MCF 10A (cell line): ENCODE measurements at regions of chr1 and their contacts with region 1.

Region 1: DNA sequence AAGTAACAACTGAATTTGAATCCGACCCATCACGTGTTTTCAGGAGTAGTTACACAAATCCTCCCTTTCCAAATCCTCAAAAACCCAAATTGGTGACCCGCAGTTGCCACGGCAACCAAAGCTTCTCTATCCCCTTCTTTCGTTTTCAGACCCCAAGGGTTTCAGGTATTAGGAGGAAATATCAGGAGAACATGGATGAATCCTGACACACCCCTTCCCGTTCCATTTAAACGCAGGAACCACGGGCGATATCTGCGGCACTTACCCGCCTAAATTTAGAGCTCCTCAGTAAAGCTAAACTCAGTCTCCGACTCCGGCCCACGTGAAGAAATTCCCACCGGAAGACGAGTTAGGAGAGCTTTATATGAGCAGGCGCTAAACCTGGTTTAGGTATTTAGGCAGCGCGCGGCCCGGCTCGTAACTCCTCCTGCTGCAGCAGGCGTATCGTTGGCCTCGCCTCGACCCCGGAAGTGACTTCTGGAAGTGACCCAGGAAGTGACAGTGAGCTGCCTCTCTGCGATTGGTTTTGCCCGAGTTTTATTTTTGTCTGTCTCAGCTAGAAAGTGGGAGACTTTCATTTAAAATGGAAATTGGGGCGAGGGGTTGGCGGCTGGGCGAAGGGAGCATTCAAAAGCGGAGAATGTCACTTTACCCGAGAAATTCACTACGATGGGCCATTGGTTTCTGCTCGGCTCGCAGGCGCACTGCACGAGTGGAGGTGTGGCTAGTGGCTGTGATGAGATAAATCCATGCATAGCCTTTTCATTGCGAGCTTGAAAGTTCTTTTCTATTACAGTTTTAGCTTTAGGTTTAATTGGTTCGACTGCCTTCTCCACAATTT is at the start of gene TAF1A:
- DNase-seq: peak; percentile 97
- H3K4me3 Mint-ChIP-seq: peak within 1 kb of the TSS; percentile 97
- H3K27ac Mint-ChIP-seq: peak within 1 kb of the TSS; percentile 96
- H3K4me1 Mint-ChIP-seq: peaks cover 58% of the 10 kb centered on the region
- H3K27me3 Mint-ChIP-seq: no peaks in the 10 kb centered on the region
- CTCF ChIP-seq: no peak
- total RNA-seq, gene TAF1A: 38.2 and 39.3 TPM in 2 replicates

Region 2: GRCh38 chr1:222557148-222557547 is 32.5 kb before region 1 on chr1:
- CTCF ChIA-PET with region 1: no interaction called
- POLR2A ChIA-PET with region 1: interaction called, 14 read pairs
- intact Hi-C with region 1: no loop called
- DNase-seq: peak; percentile 32
- H3K4me3 Mint-ChIP-seq: no peak overlapping the region
- H3K27ac Mint-ChIP-seq: no peak overlapping the region
- H3K4me1 Mint-ChIP-seq: no peaks in the 10 kb centered on the region
- H3K27me3 Mint-ChIP-seq: no peaks in the 10 kb centered on the region
- CTCF ChIP-seq: no peak

Region 3: GRCh38 chr1:222600281-222600680 is 10.6 kb after region 1 on chr1:
- CTCF ChIA-PET with region 1: interaction called, 8 read pairs
- POLR2A ChIA-PET with region 1: interaction called, 33 read pairs
- intact Hi-C with region 1: no loop called
- DNase-seq: peak; percentile 13
- H3K4me3 Mint-ChIP-seq: no peak overlapping the region
- H3K27ac Mint-ChIP-seq: peak overlapping the region; percentile 77
- H3K4me1 Mint-ChIP-seq: peaks cover 18% of the 10 kb centered on the region
- H3K27me3 Mint-ChIP-seq: no peaks in the 10 kb centered on the region
- CTCF ChIP-seq: no peak

Region 4: GRCh38 chr1:222634180-222635013 is 44.7 kb after region 1 on chr1:
- CTCF ChIA-PET with region 1: interaction called, 13 read pairs
- POLR2A ChIA-PET with region 1: interaction called, 19 read pairs
- intact Hi-C with region 1: loop called (anchors 1 kb)
- DNase-seq: peak; percentile 97
- H3K4me3 Mint-ChIP-seq: no peak overlapping the region
- H3K27ac Mint-ChIP-seq: peak overlapping the region; percentile 55
- H3K4me1 Mint-ChIP-seq: peaks cover 6% of the 10 kb centered on the region
- H3K27me3 Mint-ChIP-seq: no peaks in the 10 kb centered on the region
- CTCF ChIP-seq: peak; percentile 97

Region 5: DNA sequence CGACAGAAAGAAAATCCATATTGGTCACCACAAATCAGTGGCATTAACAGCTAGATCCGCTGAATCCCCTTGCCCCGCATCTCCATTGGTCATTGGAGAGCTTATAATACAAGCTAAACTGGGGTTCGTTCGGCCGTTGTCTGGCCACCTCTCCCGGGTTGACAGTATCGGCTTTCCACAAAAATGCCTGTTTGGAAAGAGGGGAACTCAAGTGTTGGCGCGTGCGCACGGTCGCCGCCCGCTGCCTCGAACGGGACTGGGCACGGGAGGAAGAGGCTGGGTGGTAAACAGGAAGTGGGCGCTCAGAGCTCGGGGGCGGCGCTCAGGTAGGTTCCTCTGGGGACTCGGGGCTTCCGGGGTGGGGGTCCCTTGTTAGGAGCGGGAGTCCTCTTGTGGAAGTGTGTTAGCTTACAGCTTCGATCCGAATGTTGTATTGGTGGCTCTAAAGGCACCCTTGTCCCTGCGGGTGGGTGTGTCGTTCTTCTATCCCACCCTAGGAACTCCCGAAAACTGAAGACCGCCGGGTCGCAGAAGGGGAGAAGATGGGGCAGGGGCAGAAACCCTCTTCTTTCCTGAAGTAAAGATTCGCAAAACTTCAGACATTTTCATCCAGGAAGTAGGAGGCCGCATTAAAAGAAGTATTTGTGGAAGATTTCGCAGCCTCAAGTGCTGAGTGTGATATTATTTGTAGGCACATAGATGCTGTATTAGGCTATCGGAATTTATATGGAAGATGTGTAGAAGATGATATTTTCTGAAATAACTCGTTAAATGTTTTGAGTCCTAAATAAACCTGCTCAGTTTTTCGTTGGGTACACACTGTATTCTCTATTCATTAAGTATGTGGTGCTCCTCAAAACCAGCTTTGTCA is 123.6 kb after region 1 on chr1:
- CTCF ChIA-PET with region 1: no interaction called
- POLR2A ChIA-PET with region 1: interaction called, 29 read pairs
- intact Hi-C with region 1: no loop called
- DNase-seq: peak; percentile 99
- H3K4me3 Mint-ChIP-seq: peak overlapping the region; percentile 86
- H3K27ac Mint-ChIP-seq: peak overlapping the region; percentile 97
- H3K4me1 Mint-ChIP-seq: peaks cover 40% of the 10 kb centered on the region
- H3K27me3 Mint-ChIP-seq: no peaks in the 10 kb centered on the region
- CTCF ChIP-seq: no peak

Region 6: DNA sequence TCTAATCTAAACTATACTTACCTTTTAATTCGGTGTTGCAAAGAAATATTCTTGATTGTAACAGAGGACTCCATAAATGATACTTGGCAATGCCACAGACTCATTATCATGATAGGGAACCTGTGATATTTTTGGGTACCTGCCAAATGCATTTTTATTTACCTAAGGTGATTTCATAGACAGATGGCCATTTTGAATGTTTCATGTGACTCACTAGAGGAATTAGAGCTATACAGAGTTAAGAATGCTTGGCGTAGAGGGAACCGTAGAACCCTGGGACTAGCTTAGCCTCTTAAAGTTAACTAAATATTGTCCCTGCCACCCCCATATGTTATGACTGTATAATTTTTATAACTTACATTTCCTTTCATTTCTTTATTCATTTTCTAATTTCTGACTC is 361.2 kb after region 1 on chr1:
- CTCF ChIA-PET with region 1: no interaction called
- POLR2A ChIA-PET with region 1: no interaction called
- intact Hi-C with region 1: no loop called
- DNase-seq: peak; percentile 75
- H3K4me3 Mint-ChIP-seq: no peak overlapping the region
- H3K27ac Mint-ChIP-seq: peak overlapping the region; percentile 68
- H3K4me1 Mint-ChIP-seq: peaks cover 17% of the 10 kb centered on the region
- H3K27me3 Mint-ChIP-seq: no peaks in the 10 kb centered on the region
- CTCF ChIP-seq: no peak